Heart right ventricle (tissue), 16 donors: ENCODE measurements at regions of chr12 and their contacts with region 1.

Region 1: GRCh38 chr12:31406345-31406744 is 80.4 kb upstream of the SINHCAF start:
- DNase-seq: no peak
- ATAC-seq: no peak
- H3K4me3 ChIP-seq: no peak overlapping the region
- H3K27ac ChIP-seq: no peak overlapping the region
- H3K4me1 ChIP-seq: peaks cover 0 to 12% (median 0%) of the 10 kb centered on the region in 9 donors
- H3K27me3 ChIP-seq: no peaks in the 10 kb centered on the region
- CTCF ChIP-seq: no peak

Region 2: DNA sequence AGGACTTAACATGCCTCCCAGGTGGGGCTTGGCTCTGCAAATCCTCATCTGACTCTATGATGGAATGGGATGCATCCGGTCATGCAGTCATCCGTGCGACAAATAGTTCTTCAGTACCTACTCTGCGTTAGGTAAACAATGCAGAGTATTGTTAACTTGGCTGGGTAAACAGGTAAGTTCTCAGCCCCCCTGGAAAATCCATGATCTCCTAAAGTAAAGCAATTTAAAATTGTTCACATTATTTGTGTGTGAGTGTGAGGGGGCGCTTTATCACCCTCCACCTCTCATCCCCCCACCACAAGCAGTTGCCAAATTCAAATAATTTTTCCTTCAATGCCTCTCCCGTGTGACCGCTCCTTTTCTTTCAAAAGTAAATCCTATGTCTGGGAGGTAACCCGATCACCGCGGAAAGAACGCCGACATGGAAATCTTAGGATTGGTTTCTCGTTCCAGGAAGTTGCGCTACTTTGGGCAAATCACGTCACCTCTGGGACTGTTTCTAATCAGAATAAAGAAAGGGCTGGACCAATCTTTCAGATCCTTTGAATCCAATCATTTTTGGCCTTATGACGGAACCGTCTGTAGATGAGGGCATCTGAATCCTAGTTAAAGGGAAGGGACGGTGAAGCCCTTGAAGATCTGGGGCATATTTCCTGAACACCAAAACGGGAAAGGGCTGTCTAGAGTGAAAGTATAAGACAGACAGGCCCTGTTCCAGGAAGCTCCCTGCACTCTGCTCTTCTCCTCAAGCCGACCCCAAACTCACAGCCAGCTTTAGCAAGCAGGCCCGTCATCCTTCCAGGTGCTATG is 36.4 kb before region 1 on chr12:
- intact Hi-C with region 1: no loop called
- DNase-seq: peak in 1 of 2 donors; percentile 61
- ATAC-seq: peak; percentile 49 to 88 (median 73)
- H3K4me3 ChIP-seq: peak overlapping the region in 8 of 10 donors; percentile 1 to 51 (median 35)
- H3K27ac ChIP-seq: peak overlapping the region in 5 of 10 donors; percentile 2 to 73 (median 51)
- H3K4me1 ChIP-seq: peaks cover 0 to 19% (median 8%) of the 10 kb centered on the region in 9 donors
- H3K27me3 ChIP-seq: no peaks in the 10 kb centered on the region
- CTCF ChIP-seq: no peak

Region 3: GRCh38 chr12:31629756-31630732 is 223.7 kb after region 1 on chr12:
- intact Hi-C with region 1: loop called in 2 of 10 experiments (anchors 2 to 5 kb)
- DNase-seq: peak; percentile 23 to 72
- ATAC-seq: peak; percentile 88 to 97 (median 94)
- H3K4me3 ChIP-seq: peak overlapping the region in 1 of 10 donors; percentile 3
- H3K27ac ChIP-seq: peak overlapping the region in 9 of 10 donors; percentile 38 to 68 (median 57)
- H3K4me1 ChIP-seq: peaks cover 6 to 24% (median 17%) of the 10 kb centered on the region in 9 donors
- H3K27me3 ChIP-seq: no peaks in the 10 kb centered on the region
- CTCF ChIP-seq: no peak